ENCODE measurements at regions of chr12 and their contacts with region 1.

Region 1: DNA sequence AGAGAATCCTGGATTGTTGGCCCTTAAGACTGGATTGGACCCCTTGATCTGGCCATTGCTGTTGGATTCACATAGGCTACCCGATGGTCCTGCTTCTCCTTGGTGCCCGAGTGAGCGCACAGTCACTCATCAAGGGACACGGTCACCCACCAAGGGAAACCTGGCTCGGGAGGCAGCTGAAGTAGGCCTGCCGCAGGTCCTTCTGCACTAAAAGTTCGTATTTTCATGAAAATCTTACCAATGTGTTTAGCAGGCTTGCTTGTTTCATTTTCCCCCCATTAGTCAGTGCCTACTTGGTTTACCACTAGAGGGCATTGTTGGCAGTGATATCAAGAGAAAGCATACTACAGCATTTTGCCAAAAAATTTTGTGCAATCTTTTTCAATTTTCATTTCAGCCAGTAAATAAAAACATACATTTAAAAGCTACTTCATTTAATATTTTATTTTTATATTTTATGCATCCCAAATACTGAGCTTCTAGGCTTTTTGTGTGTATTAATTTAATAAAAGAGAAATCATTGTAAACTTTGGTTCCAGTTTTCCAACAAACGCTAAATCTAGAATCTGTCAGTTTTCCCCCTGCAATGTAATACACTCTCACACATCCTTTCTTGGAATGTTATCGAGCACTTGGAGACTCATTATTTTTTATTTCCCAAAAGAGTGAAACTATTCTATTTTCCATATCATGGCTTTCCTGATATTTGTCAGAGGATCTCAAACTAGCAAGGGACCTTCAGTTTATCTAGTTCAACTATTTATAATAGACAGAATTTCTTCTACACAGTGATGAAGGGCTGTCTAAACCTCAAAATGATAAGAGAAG is 116.7 kb downstream of the LMNTD1 start:
- DNase-seq: no peak
- H3K4me3 ChIP-seq: peak overlapping the region; percentile 23; the same call in 1 of the 2 replicates
- CTCF ChIP-seq: peak; percentile 73

Region 2: DNA sequence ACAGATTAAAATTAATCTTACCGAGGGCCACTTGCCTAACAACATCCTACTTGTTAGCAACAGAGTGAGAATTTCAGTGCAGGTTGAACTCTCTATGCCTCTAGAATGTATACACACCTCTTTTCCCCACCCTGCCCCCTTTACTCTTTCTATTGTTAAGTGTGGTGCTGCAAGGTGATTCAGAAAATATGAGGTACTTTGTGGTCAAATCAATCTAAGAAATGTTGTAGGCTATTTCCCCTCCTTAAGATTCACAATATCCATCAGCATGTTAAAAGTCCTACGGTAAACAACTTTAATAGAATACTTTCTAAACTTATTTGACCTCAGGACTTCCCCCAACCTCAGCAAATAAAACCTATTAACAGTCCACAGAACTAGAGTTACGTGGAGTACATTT is 10.6 kb after region 1 on chr12:
- CTCF ChIA-PET with region 1: interaction called, 16 read pairs
- POLR2A ChIA-PET with region 1: interaction called, 3 read pairs
- DNase-seq: no peak
- H3K4me3 ChIP-seq: no peak overlapping the region
- CTCF ChIP-seq: no peak

Region 3: DNA sequence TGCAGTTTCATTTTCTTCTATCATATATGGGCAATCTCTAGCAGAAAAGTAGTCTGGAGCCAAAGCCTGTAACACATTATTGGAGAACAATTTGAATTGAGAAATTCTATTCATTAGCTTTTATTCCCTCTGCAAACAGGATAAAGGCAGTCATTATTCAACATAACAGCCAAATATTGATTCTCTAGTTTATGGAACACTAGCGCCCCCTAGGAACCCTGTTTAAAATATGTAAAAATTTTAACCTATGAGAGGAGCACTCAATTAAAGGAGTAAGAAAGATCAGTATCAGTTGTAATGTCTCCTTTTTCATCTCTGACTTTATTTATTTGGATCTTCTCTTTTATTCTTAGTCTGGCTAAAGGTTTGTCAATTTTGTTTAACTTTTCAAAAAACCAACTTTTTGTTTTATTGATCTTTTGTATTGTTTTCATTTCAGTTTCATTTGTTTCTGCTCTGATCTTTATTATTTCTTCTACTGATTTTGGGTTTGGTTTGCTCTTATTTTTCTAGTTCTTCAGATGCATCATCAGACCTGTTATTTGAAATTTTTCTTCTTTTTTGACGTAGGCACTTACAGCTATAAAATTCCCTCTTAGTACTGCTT is 121.5 kb after region 1 on chr12:
- CTCF ChIA-PET with region 1: interaction called, 11 read pairs
- POLR2A ChIA-PET with region 1: no interaction called
- DNase-seq: no peak
- H3K4me3 ChIP-seq: no peak overlapping the region
- CTCF ChIP-seq: no peak

Region 4: GRCh38 chr12:26017484-26018206 is 581.2 kb after region 1 on chr12:
- CTCF ChIA-PET with region 1: interaction called, 11 read pairs
- POLR2A ChIA-PET with region 1: no interaction called
- DNase-seq: no peak
- H3K4me3 ChIP-seq: no peak overlapping the region
- CTCF ChIP-seq: peak; percentile 44